ENCODE measurements at regions of chr19 and their contacts with region 1.

Region 1: DNA sequence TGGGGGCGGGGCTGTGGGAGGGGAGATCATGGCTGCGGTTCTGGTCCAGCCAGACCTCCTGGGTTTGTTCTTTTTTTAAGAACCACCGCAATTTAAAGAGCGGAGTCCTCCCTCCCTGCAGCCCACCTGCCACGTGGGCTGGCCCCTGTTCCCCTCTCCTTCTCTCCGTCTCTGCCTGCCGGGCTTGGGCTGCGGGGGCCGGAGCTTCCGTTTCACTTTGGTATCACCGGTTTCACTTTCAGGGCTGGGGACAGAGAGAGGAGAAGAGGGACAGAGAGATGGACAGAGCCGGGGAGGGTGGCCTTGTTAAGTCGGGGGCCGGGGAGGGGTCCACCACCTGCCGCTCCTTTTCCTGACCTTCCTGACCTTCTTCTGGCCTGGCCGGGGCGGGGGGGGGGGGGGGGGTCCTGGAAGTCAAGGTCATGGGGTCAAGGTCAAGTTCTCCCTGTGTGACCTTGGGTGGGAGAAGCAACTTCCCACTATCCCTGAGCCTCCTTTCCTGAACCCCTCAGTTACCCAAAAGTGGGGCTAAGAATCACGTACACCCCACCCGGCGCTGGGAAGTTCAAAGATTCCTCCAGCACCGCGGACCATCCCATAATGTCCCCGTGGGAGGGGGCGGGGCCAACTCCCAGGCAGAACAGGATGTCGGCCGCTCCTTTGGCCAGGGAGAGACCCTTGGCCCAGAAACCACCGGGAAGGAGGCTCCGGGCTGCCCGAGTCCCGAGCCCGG is 11.3 kb upstream of the ZBTB7A start:
- DNase-seq: no peak
- H3K4me3 ChIP-seq: no peak overlapping the region
- H3K27ac ChIP-seq: no peak overlapping the region
- H3K4me1 ChIP-seq: peaks cover 0 to 13% (median 8%) of the 10 kb centered on the region in 4 experiments; a peak in 5 of 7 replicates
- H3K27me3 ChIP-seq: no peaks in the 10 kb centered on the region; a peak in 1 of 7 replicates
- CTCF ChIP-seq: no peak
- EP300 ChIP-seq: no peak
- POLR2A ChIP-seq: no peak
- RAD21 ChIP-seq: no peak

Region 2: DNA sequence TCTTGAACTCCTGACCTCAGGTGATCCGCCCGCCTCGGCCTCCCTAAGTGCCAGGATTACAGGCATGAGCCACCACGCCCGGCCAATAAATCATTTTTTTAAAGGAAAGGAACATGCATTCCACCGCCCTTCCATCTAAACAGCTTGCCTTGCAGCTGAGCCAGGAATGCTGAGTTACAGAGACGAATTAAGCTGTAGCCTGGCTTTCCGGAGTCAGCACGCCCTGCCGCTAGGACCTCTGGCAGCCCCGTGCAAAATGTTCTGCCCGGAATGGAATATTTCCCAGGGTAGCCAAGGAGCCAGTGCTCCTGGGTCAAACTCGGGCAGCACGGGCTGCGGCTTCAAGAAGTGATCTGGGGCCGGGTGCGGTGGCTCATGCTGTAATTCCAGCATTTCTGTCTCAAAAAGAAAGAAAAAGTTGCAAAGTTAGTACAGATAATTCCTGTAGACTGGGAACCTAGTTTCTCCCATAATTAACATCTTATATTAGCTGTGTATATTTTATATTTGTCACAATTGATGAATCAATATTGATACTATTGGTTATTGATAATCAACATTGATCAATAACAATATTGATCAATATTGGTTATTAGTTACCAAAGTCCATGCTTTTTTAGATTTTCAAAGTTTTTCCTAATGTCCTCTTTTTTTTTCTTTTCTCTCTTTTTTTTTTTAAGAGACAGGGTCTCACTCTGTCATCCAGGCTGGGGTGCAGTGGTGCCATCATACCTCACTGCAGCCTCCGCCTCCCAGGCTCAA is 178.3 kb before region 1 on chr19:
- CTCF ChIA-PET with region 1: no interaction called
- POLR2A ChIA-PET with region 1: no interaction called
- DNase-seq: no peak
- H3K4me3 ChIP-seq: no peak overlapping the region
- H3K27ac ChIP-seq: no peak overlapping the region
- H3K4me1 ChIP-seq: no peaks in the 10 kb centered on the region
- H3K27me3 ChIP-seq: no peaks in the 10 kb centered on the region
- CTCF ChIP-seq: no peak
- EP300 ChIP-seq: no peak
- POLR2A ChIP-seq: no peak
- RAD21 ChIP-seq: no peak

Region 3: GRCh38 chr19:4064496-4065260 is 13.4 kb before region 1 on chr19:
- CTCF ChIA-PET with region 1: interaction called, 3 read pairs
- POLR2A ChIA-PET with region 1: interaction called, 22 read pairs
- DNase-seq: no peak
- H3K4me3 ChIP-seq: peak overlapping the region; percentile 63 to 94 (median 73)
- H3K27ac ChIP-seq: no peak overlapping the region; the same call in 1 of the 2 replicates
- H3K4me1 ChIP-seq: peaks cover 0 to 37% (median 19%) of the 10 kb centered on the region in 4 experiments; a peak in 6 of 7 replicates
- H3K27me3 ChIP-seq: peaks cover 10 to 24% (median 22%) of the 10 kb centered on the region in 4 experiments
- CTCF ChIP-seq: no peak
- EP300 ChIP-seq: no peak
- POLR2A ChIP-seq: no peak
- RAD21 ChIP-seq: no peak

Region 4: DNA sequence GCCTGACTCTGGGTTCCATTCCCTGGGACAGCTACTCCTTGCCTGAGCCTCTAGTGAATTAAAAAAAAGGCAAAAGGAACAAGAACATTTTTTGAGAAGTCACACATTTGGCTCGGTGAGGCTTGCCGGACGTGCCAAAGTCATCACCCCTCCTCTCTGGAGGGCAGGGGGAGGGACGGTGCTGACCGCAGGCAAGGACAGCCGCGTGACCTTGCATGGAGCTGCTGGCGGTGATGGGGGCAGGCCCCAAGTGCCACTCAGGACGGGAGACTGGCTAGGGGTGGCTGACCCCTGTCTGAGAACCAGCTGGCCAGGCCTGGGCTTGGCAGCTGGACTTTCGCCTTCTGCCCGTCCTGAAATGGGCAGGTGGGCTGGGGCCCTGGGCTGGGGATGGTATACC is 19.5 kb after region 1 on chr19:
- CTCF ChIA-PET with region 1: no interaction called
- POLR2A ChIA-PET with region 1: interaction called, 14 read pairs
- DNase-seq: no peak
- H3K4me3 ChIP-seq: no peak overlapping the region
- H3K27ac ChIP-seq: no peak overlapping the region
- H3K4me1 ChIP-seq: no peaks in the 10 kb centered on the region
- H3K27me3 ChIP-seq: no peaks in the 10 kb centered on the region
- CTCF ChIP-seq: no peak
- EP300 ChIP-seq: no peak
- POLR2A ChIP-seq: no peak
- RAD21 ChIP-seq: no peak

Measured in H1 (cell line).